H1 (cell line): ENCODE measurements at regions of chr11 and their contacts with region 1.

Region 1: DNA sequence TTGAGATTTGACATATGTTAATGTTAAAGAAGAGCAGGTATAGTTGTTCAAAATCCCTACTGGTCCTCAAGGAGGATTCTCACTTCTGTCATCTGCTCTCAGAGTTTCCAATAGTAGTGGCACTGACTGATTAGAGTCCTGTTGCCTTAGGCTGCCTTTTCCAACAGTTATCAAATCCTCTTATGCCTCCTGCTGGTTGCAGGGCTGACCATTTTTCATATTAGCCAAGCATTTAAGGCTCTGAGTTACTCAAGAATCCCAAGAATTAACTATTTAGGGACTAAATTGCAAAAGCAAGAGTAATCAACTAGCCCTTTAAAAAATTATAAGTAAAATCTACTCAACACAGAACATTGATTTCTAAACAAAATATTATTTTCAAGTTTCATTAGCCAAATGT is 212.0 kb upstream of the CHORDC1 start:
- DNase-seq: no peak
- H3K4me3 ChIP-seq: no peak overlapping the region
- H3K27ac ChIP-seq: no peak overlapping the region
- H3K4me1 ChIP-seq: peaks cover 0 to 23% (median 10%) of the 10 kb centered on the region in 4 experiments; a peak in 3 of 7 replicates
- H3K27me3 ChIP-seq: no peaks in the 10 kb centered on the region
- CTCF ChIP-seq: peak in 2 of 3 experiments; percentile 23 to 28; a peak in 2 of 4 replicates
- EP300 ChIP-seq: no peak
- POLR2A ChIP-seq: no peak
- RAD21 ChIP-seq: peak; percentile 58 to 62

Region 2: DNA sequence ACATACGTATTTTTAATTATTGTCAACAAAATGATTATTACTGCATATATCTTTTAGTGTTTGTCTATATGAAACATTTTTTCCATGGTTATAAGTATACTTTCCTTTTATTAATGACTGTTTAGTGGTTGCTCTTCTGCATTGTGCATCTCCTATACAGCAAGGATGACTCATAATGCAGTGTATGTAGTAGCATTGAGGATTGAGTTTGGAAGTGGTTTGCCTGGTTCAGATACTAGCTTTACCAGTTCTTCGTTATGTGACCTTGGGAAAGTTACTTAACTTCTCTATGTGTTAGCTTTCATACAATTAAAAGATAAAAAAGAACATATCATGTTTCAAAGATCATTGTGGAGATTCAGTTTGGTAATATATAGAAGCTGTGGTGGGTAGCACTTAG is 256.1 kb before region 1 on chr11:
- CTCF ChIA-PET with region 1: no interaction called
- POLR2A ChIA-PET with region 1: no interaction called
- DNase-seq: no peak
- H3K4me3 ChIP-seq: no peak overlapping the region
- H3K27ac ChIP-seq: no peak overlapping the region
- H3K4me1 ChIP-seq: no peaks in the 10 kb centered on the region
- H3K27me3 ChIP-seq: no peaks in the 10 kb centered on the region
- CTCF ChIP-seq: no peak
- EP300 ChIP-seq: no peak
- POLR2A ChIP-seq: no peak
- RAD21 ChIP-seq: no peak

Region 3: GRCh38 chr11:90392692-90393091 is 42.2 kb before region 1 on chr11:
- CTCF ChIA-PET with region 1: interaction called, 11 read pairs
- POLR2A ChIA-PET with region 1: no interaction called
- DNase-seq: no peak
- H3K4me3 ChIP-seq: no peak overlapping the region
- H3K27ac ChIP-seq: no peak overlapping the region
- H3K4me1 ChIP-seq: peaks cover 0 to 3% (median 0%) of the 10 kb centered on the region in 4 experiments; a peak in 1 of 7 replicates
- H3K27me3 ChIP-seq: no peaks in the 10 kb centered on the region
- CTCF ChIP-seq: peak in 1 of 3 experiments; percentile 26; a peak in 2 of 4 replicates
- EP300 ChIP-seq: no peak
- POLR2A ChIP-seq: no peak
- RAD21 ChIP-seq: 0 out of 4 replicates have a peak, but pooled peaks of 1 of the 2 experiments have one; percentile 19